H1 (cell line): ENCODE measurements at regions of chr15 and their contacts with region 1.

Region 1: DNA sequence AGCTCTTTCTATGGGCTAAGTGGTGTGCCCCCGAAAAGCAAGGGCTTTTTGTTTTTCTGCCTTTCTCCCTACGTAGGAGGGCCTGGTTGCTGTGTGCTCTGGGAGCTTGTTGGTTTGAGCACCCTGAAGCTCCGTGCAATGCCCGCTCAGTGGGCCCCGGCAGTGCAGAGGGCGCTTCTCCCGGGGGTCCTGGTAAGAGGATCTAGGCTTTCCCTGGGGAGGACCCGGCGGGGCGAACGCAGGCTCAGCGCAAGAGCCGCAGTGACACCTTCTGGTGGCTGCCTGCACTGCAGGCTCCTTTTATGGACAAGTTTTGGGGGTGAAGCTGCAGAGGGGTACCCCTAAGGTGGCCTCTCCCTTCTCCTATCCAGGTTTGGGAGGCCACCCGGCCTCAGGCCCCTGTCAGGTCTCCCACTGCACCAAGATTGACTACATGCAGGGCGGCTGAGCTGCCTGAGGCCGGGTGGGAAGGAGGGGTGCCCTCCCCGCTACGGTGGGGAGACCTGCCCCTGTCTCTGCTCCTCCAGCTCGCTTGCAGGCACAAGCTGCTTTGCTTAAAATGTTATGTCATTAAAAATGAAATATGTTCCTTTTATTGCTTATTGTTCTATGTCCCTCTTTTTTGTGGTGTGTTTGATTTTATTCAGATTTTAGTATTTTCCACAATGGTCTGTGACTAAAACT is 387.9 kb downstream of the GABRG3 start:
- DNase-seq: peak; percentile 49 to 90
- H3K4me3 ChIP-seq: peak overlapping the region in 1 of 4 experiments; percentile 42; a peak in 1 of 8 replicates
- H3K27ac ChIP-seq: no peak overlapping the region
- H3K4me1 ChIP-seq: no peaks in the 10 kb centered on the region
- H3K27me3 ChIP-seq: no peaks in the 10 kb centered on the region
- CTCF ChIP-seq: peak; percentile 87 to 90 (median 89)
- EP300 ChIP-seq: no peak
- POLR2A ChIP-seq: no peak
- RAD21 ChIP-seq: peak; percentile 93 to 94

Region 2: DNA sequence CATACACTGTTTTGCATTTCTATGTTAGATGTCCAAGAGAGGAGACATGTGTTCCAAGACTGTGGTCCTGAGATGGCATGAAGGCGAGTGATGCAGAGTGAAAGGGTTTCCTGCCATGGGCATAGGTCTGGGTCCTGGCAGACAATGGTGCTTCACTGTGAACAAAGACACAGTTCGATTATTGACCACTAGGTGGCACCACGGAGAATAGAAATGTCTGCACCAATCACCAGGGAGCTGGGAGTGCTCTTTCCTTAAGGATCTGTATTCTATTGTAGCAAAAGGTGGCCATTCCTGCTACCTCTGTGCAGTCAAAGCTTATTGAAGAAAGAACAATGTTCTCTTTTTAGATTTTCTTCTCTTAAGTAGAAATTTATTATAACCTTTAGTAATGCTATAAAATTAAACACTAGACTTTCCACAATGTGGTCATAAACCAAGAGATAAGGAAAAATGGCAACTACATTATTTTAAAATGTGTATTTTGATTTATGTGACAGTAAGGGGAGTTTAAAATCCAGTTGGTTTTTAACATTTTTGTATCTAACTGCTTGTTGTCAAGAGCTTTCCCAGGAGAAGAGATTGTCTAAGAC is 299.2 kb before region 1 on chr15:
- CTCF ChIA-PET with region 1: interaction called, 14 read pairs
- POLR2A ChIA-PET with region 1: no interaction called
- DNase-seq: peak; percentile 13 to 86
- H3K4me3 ChIP-seq: no peak overlapping the region
- H3K27ac ChIP-seq: no peak overlapping the region
- H3K4me1 ChIP-seq: no peaks in the 10 kb centered on the region
- H3K27me3 ChIP-seq: no peaks in the 10 kb centered on the region
- CTCF ChIP-seq: peak; percentile 29 to 83 (median 56)
- EP300 ChIP-seq: no peak
- POLR2A ChIP-seq: no peak
- RAD21 ChIP-seq: peak; percentile 57 to 70

Region 3: DNA sequence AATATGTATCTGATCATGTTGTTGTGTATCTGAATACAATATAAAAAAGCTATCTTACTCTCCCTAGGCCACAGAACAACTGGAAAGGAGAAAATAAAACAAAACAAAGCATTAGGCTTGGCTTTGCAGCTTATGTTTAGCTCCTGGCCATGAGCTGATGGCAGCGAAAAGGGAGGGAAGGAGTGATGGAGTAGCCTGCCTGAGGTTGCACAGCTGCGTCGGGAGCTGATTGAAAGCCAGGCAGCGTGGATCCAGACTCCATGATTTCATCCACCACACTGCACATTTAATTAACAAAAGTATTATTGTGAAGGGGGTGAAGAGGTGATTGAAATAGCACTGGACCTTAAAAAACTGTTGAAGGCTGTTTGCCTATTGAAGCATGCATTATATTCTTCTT is 175.7 kb before region 1 on chr15:
- CTCF ChIA-PET with region 1: no interaction called
- POLR2A ChIA-PET with region 1: no interaction called
- DNase-seq: no peak
- H3K4me3 ChIP-seq: no peak overlapping the region
- H3K27ac ChIP-seq: no peak overlapping the region
- H3K4me1 ChIP-seq: peaks cover 0 to 3% (median 0%) of the 10 kb centered on the region in 4 experiments; a peak in 1 of 7 replicates
- H3K27me3 ChIP-seq: no peaks in the 10 kb centered on the region; a peak in 1 of 7 replicates
- CTCF ChIP-seq: no peak
- EP300 ChIP-seq: no peak
- POLR2A ChIP-seq: no peak
- RAD21 ChIP-seq: no peak

Region 4: DNA sequence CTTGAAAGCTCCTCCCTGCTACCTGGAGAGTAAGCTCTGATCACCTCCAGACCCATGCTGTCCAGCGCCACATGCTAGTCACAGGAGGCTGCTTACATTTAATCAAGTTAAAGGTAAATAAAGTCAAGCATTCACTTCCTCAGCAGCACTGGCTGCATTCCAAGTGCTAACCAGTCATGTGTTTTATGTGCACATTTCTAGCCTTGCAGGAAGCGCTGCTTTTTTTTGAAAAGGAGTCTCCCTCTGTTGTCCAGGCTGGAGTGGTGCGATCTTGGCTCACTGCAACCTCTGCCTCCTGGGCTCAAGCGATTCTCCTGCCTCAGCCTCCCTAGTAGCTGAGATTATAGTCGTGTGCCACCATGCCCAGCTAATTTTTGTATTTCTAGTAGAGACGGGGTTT is 108.7 kb before region 1 on chr15:
- CTCF ChIA-PET with region 1: interaction called, 12 read pairs
- POLR2A ChIA-PET with region 1: no interaction called
- DNase-seq: no peak
- H3K4me3 ChIP-seq: no peak overlapping the region
- H3K27ac ChIP-seq: no peak overlapping the region
- H3K4me1 ChIP-seq: no peaks in the 10 kb centered on the region; a peak in 1 of 7 replicates
- H3K27me3 ChIP-seq: no peaks in the 10 kb centered on the region
- CTCF ChIP-seq: peak in 1 of 3 experiments; percentile 16; a peak in 1 of 4 replicates
- EP300 ChIP-seq: no peak
- POLR2A ChIP-seq: no peak
- RAD21 ChIP-seq: no peak

Region 5: GRCh38 chr15:27342991-27343390 is 15.9 kb before region 1 on chr15:
- CTCF ChIA-PET with region 1: interaction called, 27 read pairs
- POLR2A ChIA-PET with region 1: interaction called, 4 read pairs
- DNase-seq: no peak
- H3K4me3 ChIP-seq: no peak overlapping the region
- H3K27ac ChIP-seq: no peak overlapping the region
- H3K4me1 ChIP-seq: peaks cover 1 to 9% (median 6%) of the 10 kb centered on the region in 4 experiments
- H3K27me3 ChIP-seq: no peaks in the 10 kb centered on the region
- CTCF ChIP-seq: no peak
- EP300 ChIP-seq: no peak
- POLR2A ChIP-seq: no peak
- RAD21 ChIP-seq: no peak

Region 6: DNA sequence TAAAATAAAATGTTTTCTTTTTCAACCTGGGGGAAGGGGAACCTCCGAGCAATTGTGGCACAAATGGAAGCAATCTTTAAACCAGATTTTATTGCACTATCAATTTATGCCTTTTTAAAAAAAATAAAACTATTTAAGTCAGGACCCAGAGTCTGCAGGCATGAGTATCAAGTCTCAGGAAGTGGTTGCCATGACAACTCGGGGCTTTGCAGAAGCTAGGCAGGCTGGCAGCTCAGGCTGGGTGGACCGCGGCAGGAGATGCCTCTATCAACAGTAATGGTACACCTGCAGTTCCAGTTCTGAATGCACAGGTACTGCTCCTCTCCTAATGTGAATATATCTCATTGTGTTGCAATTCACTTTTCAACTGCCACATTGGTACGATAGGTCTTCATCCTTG is 59.8 kb after region 1 on chr15:
- CTCF ChIA-PET with region 1: no interaction called
- POLR2A ChIA-PET with region 1: no interaction called
- DNase-seq: no peak
- H3K4me3 ChIP-seq: no peak overlapping the region
- H3K27ac ChIP-seq: no peak overlapping the region
- H3K4me1 ChIP-seq: peaks cover 2 to 8% (median 5%) of the 10 kb centered on the region in 4 experiments; a peak in 6 of 7 replicates
- H3K27me3 ChIP-seq: no peaks in the 10 kb centered on the region; a peak in 1 of 7 replicates
- CTCF ChIP-seq: no peak
- EP300 ChIP-seq: no peak
- POLR2A ChIP-seq: no peak
- RAD21 ChIP-seq: no peak

Region 7: DNA sequence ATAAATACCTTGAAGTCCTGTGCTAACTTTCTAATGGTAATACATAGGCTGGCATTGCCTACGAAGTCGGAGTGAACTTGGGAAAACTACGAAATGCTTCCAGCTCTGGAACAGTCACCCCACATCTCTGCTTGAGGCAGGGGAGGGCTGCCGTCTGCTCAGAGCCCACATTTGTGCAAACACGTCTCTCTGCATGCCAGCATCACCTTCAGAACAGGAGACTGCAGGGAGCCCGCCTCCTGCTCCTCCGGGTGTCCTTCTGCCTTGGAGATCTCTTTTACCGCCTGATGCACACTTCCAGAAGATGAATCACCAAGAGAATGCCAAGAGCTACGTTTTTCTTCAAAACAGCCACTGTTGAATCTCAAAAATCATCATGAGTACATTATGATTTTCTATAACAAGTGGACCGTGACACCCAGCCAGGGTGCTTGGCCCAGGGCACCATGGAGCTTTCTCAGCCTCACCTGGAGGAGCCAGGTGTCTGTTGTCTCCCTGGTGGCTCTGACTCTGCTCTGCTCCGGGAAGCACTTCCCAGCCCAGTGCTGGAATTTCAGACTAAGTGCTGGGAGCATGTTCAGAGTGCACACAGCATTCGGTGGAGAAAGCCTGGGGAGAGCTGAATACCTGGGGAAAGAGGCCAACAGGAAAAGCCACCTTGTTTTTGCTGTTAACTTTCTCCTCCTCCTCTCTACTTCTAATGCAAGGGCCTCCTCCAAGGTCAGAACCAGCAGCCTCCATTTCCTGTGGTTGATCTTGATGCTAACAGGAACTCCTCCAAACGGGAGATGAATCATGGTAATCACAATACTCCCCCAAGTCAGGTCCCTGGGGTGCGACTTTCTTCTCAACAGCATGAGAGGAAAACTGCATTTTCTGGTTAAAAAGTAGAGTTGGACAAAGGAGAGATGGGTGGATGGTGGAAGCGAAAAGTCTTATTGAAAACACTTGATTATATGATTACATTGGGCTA is 79.8 kb after region 1 on chr15:
- CTCF ChIA-PET with region 1: no interaction called
- POLR2A ChIA-PET with region 1: no interaction called
- DNase-seq: no peak
- H3K4me3 ChIP-seq: no peak overlapping the region
- H3K27ac ChIP-seq: no peak overlapping the region
- H3K4me1 ChIP-seq: peaks cover 0 to 3% (median 0%) of the 10 kb centered on the region in 4 experiments; a peak in 1 of 7 replicates
- H3K27me3 ChIP-seq: no peaks in the 10 kb centered on the region
- CTCF ChIP-seq: no peak
- EP300 ChIP-seq: no peak
- POLR2A ChIP-seq: no peak
- RAD21 ChIP-seq: no peak